ENCODE measurements at regions of chr10 and their contacts with region 1.

Region 1: GRCh38 chr10:35707642-35708420 is 65.7 kb upstream of the FZD8 start:
- DNase-seq: no peak
- ATAC-seq: no peak
- H3K4me3 ChIP-seq: no peak overlapping the region
- H3K4me3 Mint-ChIP-seq: no peak overlapping the region
- H3K27ac ChIP-seq: no peak overlapping the region
- H3K27ac Mint-ChIP-seq: no peak overlapping the region
- H3K4me1 ChIP-seq: no peaks in the 10 kb centered on the region
- H3K4me1 Mint-ChIP-seq: no peaks in the 10 kb centered on the region
- H3K27me3 ChIP-seq: peaks cover 0 to 6% of the 10 kb centered on the region in 2 experiments
- H3K27me3 Mint-ChIP-seq: peaks cover 23% of the 10 kb centered on the region
- CTCF ChIP-seq: no peak

Region 2: GRCh38 chr10:34489973-34490745 is 1217.7 kb before region 1 on chr10:
- CTCF ChIA-PET with region 1: no interaction called
- POLR2A ChIA-PET with region 1: no interaction called
- intact Hi-C with region 1: loop called in 1 of 2 experiments (anchors 5 kb)
- DNase-seq: no peak
- ATAC-seq: no peak
- H3K4me3 ChIP-seq: no peak overlapping the region
- H3K4me3 Mint-ChIP-seq: no peak overlapping the region
- H3K27ac ChIP-seq: no peak overlapping the region
- H3K27ac Mint-ChIP-seq: no peak overlapping the region
- H3K4me1 ChIP-seq: no peaks in the 10 kb centered on the region
- H3K4me1 Mint-ChIP-seq: no peaks in the 10 kb centered on the region
- H3K27me3 ChIP-seq: no peaks in the 10 kb centered on the region
- H3K27me3 Mint-ChIP-seq: no peaks in the 10 kb centered on the region
- CTCF ChIP-seq: no peak

Measured in CD4-positive, alpha-beta T cell (primary cell).